SK-N-SH (cell line): ENCODE measurements at regions of chr1 and their contacts with region 1.

Region 1: DNA sequence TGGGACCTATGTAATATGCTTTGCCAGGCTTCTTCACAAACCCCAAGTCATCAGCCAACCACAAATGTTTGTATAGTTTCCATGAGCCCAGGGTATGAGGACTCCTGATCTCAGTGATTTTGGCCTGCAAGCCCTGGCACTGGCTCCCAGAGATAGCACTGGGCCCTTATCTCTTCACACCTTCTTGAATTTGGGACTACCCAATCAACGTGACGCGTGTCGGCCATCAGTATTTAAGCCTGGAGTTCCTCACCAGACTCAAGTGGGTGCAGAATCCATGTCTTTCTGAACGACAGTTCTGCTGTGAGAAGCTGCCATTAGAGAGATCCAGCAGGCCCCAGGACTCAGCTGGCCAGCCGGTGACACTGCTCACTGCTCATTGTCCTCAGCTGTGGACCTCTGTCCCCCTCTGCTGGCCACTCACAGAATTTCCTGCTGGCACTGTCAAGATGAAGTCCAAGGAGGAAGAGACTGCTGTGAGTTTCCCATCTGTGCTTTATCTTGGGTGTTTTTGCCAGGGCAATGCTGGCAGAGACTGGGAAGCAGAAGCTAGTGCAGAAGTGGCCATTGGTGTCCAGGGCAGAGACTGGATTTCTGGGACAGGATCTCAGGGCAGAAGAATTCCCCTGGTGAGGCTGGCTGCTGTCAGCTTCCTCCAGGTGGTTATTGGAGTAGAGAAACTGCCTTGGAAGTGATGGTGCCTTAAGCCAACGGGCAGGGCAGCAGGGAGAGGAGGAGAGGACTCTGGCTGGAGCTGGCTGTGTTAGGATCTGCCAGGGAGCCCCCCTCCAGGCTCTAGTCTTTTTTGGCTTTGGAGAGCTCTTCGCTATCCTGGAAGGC is 28.4 kb downstream of the TMCC2 start:
- DNase-seq: peak; percentile 90
- H3K4me3 ChIP-seq: no peak overlapping the region; a peak in 1 of 4 replicates
- H3K27ac ChIP-seq: no peak overlapping the region
- H3K4me1 ChIP-seq: peaks cover 14 to 19% of the 10 kb centered on the region in 2 experiments; a peak in 3 of 4 replicates
- H3K27me3 ChIP-seq: no peaks in the 10 kb centered on the region
- CTCF ChIP-seq: peak; percentile 94
- EP300 ChIP-seq: no peak
- RAD21 ChIP-seq: peak; percentile 100

Region 2: DNA sequence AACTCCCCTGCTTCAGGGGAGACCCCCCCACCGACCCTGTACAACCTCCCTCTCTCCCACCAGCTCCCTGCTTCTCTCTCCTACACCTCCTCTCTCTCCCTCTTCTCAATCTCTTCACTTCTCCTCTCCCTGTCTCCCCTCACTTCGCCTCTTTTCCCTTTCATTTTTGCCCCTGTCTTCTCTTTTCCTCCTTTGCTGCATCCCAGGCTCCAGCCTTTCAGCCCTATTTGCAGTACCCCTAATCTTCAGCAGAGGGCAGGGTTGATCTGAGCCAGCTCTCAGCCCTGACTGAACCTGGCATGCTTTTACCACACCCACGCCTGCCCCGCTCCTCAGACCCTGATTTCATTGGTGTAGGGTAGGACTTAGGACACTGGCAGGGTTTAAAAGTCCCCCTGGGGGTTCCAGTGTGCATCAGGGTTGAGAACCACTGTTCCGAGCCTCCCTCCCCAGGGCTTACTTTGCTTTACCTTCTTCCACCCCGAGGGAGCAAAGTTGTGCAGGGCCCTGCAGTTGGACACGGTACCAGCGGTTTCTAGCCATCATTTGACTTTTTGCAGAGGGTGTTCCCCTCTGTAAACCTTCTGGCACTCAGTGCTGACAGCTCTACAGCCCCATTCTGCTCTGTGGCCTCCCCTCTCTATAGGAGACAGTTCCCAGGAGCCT is 280.5 kb before region 1 on chr1:
- CTCF ChIA-PET with region 1: interaction called, 35 read pairs
- POLR2A ChIA-PET with region 1: no interaction called
- DNase-seq: peak; percentile 88
- H3K4me3 ChIP-seq: no peak overlapping the region; a peak in 1 of 4 replicates
- H3K27ac ChIP-seq: no peak overlapping the region
- H3K4me1 ChIP-seq: peaks cover 0 to 11% of the 10 kb centered on the region in 2 experiments; a peak in 2 of 4 replicates
- H3K27me3 ChIP-seq: no peaks in the 10 kb centered on the region
- CTCF ChIP-seq: peak; percentile 77
- EP300 ChIP-seq: no peak
- RAD21 ChIP-seq: peak; percentile 79

Region 3: GRCh38 chr1:205091043-205091740 is 165.0 kb before region 1 on chr1:
- CTCF ChIA-PET with region 1: interaction called, 11 read pairs
- POLR2A ChIA-PET with region 1: no interaction called
- DNase-seq: peak; percentile 49
- H3K4me3 ChIP-seq: no peak overlapping the region
- H3K27ac ChIP-seq: 0 out of 4 replicates have a peak overlapping the region, but pooled peaks of 1 of the 2 experiments have one; percentile 6
- H3K4me1 ChIP-seq: peaks cover 0 to 4% of the 10 kb centered on the region in 2 experiments; a peak in 1 of 4 replicates
- H3K27me3 ChIP-seq: no peaks in the 10 kb centered on the region
- CTCF ChIP-seq: no peak
- EP300 ChIP-seq: no peak
- RAD21 ChIP-seq: no peak

Region 4: DNA sequence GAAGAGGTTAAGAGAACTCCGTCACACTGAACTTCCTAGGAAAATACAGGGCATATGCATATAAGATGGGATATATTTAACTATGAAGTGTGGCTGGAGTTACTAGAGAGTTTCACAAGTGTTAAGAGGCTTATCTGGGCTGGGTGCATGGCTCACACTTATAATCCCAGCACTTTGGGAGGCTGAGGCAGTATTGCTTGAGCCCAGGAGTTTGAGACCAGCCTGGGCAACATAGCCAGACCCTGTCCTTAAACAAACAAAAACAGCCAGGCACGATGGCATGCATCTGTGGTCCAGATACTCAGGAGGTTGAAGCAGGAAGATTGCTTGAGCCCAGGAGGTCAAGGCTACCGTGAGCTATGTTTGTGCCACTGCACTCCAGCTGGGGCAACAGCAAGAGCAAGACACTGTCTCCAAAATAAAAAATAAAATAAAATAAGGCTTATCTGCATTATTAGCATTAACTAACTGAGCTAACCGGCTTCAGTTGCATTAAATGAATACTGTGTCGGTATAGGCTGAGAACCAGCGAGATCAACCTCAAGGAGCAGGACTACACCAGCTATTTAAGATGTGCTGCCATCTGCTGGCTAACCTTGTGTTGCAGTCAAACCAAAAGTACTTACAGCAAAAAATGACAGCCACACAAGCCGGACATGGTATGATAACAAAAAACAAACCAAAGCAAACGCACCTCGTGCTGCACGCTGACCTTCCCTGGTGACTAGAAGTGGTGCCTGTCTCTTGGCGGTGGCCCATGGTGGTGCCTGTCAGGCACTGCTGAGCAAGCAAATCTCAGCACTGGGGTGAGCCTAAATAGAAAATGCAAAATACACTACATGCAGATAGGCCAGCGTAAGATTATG is 114.7 kb before region 1 on chr1:
- CTCF ChIA-PET with region 1: interaction called, 23 read pairs
- POLR2A ChIA-PET with region 1: no interaction called
- DNase-seq: peak; percentile 67
- H3K4me3 ChIP-seq: peak overlapping the region in 1 of 2 experiments; percentile 33; a peak in 1 of 4 replicates
- H3K27ac ChIP-seq: no peak overlapping the region
- H3K4me1 ChIP-seq: peaks cover 5 to 10% of the 10 kb centered on the region in 2 experiments
- H3K27me3 ChIP-seq: no peaks in the 10 kb centered on the region
- CTCF ChIP-seq: peak; percentile 94
- EP300 ChIP-seq: no peak
- RAD21 ChIP-seq: peak; percentile 67

Region 5: GRCh38 chr1:205211169-205211838 is 44.9 kb before region 1 on chr1 and contains the start of gene DSTYK:
- CTCF ChIA-PET with region 1: interaction called, 11 read pairs
- POLR2A ChIA-PET with region 1: no interaction called
- DNase-seq: peak; percentile 92
- H3K4me3 ChIP-seq: peak within 1 kb of the TSS; percentile 91 to 99
- H3K27ac ChIP-seq: peak within 1 kb of the TSS; percentile 86 to 89
- H3K4me1 ChIP-seq: peaks cover 3 to 5% of the 10 kb centered on the region in 2 experiments; a peak in 1 of 4 replicates
- H3K27me3 ChIP-seq: no peaks in the 10 kb centered on the region
- CTCF ChIP-seq: no peak; the same call in 1 of the 2 replicates
- EP300 ChIP-seq: no peak
- RAD21 ChIP-seq: 0 out of 2 replicates have a peak, but pooled peaks have one; percentile 3
- polyA plus RNA-seq, gene DSTYK: 4.4 and 6.4 TPM in 2 replicates

Region 6: DNA sequence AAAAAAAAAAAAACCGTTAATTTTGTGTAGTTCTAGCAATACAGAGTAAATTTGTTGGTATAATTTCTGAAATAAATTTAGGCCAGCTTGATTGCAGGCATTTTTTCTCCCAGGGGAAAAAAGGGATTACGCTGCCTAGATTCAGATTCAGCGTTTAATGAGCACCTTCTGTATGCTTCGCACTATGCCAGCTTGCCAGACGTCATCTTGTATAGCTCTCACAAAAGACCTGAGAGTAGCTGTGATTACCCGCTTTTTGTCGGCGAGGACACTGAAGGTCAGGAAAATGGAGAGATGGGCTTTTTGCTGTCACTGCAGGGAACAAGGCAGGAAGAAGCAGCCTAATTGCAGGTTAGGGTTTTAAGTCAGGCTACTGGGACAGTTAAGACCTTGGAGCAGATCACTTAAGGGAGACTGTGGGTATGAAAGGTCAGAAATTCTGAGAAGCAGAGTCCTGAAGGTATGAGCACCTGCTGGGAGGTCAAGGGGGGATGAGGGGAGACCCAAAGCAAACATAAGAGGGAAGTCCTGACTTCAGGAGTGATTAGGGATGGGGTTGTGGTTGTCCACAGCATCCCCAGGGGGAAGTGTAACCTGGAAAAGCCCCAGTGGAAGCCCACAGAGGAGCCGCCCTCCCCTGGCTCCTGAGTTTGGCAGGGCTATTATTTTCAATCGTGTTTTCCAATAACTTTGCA is 10.6 kb after region 1 on chr1:
- CTCF ChIA-PET with region 1: interaction called, 189 read pairs
- POLR2A ChIA-PET with region 1: no interaction called
- DNase-seq: no peak
- H3K4me3 ChIP-seq: no peak overlapping the region
- H3K27ac ChIP-seq: no peak overlapping the region
- H3K4me1 ChIP-seq: peaks cover 6 to 20% of the 10 kb centered on the region in 2 experiments; a peak in 3 of 4 replicates
- H3K27me3 ChIP-seq: no peaks in the 10 kb centered on the region
- CTCF ChIP-seq: no peak
- EP300 ChIP-seq: no peak
- RAD21 ChIP-seq: no peak

Region 7: GRCh38 chr1:205493241-205494085 is 237.3 kb after region 1 on chr1:
- CTCF ChIA-PET with region 1: no interaction called
- POLR2A ChIA-PET with region 1: no interaction called
- DNase-seq: peak; percentile 57
- H3K4me3 ChIP-seq: no peak overlapping the region
- H3K27ac ChIP-seq: 0 out of 4 replicates have a peak overlapping the region, but pooled peaks of 1 of the 2 experiments have one; percentile 3
- H3K4me1 ChIP-seq: peaks cover 20 to 21% of the 10 kb centered on the region in 2 experiments; a peak in 3 of 4 replicates
- H3K27me3 ChIP-seq: peaks cover 5% of the 10 kb centered on the region; the same call in 1 of the 2 replicates
- CTCF ChIP-seq: no peak
- EP300 ChIP-seq: peak in 1 of 2 experiments; percentile 37; a peak in 1 of 4 replicates
- RAD21 ChIP-seq: no peak